Tibial artery (tissue), 4 donors: ENCODE measurements at regions of chr20 and their contacts with region 1.

Region 1: GRCh38 chr20:63864847-63865640 is at the start of gene TPD52L2:
- DNase-seq: peak; percentile 99
- H3K4me3 ChIP-seq: peak within 1 kb of the TSS; percentile 81 to 98
- H3K27ac ChIP-seq: peak within 1 kb of the TSS; percentile 88 to 99
- H3K4me1 ChIP-seq: peaks cover 0 to 44% (median 24%) of the 10 kb centered on the region in 4 donors
- H3K27me3 ChIP-seq: no peaks in the 10 kb centered on the region
- CTCF ChIP-seq: no peak

Region 2: GRCh38 chr20:63537525-63538203 is 327.4 kb before region 1 on chr20:
- intact Hi-C with region 1: loop called (anchors 10 kb)
- DNase-seq: peak; percentile 75 to 87
- H3K4me3 ChIP-seq: peak overlapping the region; percentile 9 to 10
- H3K27ac ChIP-seq: no peak overlapping the region
- H3K4me1 ChIP-seq: peaks cover 0 to 36% (median 8%) of the 10 kb centered on the region in 4 donors
- H3K27me3 ChIP-seq: peaks cover 0 to 81% of the 10 kb centered on the region in 2 donors
- CTCF ChIP-seq: peak; percentile 95 to 96

Region 3: GRCh38 chr20:63627129-63627750 is 237.8 kb before region 1 on chr20:
- intact Hi-C with region 1: loop called (anchors 10 kb)
- DNase-seq: peak; percentile 92 to 96
- H3K4me3 ChIP-seq: peak overlapping the region; percentile 74 to 75
- H3K27ac ChIP-seq: peak overlapping the region; percentile 93 to 97
- H3K4me1 ChIP-seq: peaks cover 0 to 27% (median 20%) of the 10 kb centered on the region in 4 donors
- H3K27me3 ChIP-seq: no peaks in the 10 kb centered on the region
- CTCF ChIP-seq: no peak

Region 4: DNA sequence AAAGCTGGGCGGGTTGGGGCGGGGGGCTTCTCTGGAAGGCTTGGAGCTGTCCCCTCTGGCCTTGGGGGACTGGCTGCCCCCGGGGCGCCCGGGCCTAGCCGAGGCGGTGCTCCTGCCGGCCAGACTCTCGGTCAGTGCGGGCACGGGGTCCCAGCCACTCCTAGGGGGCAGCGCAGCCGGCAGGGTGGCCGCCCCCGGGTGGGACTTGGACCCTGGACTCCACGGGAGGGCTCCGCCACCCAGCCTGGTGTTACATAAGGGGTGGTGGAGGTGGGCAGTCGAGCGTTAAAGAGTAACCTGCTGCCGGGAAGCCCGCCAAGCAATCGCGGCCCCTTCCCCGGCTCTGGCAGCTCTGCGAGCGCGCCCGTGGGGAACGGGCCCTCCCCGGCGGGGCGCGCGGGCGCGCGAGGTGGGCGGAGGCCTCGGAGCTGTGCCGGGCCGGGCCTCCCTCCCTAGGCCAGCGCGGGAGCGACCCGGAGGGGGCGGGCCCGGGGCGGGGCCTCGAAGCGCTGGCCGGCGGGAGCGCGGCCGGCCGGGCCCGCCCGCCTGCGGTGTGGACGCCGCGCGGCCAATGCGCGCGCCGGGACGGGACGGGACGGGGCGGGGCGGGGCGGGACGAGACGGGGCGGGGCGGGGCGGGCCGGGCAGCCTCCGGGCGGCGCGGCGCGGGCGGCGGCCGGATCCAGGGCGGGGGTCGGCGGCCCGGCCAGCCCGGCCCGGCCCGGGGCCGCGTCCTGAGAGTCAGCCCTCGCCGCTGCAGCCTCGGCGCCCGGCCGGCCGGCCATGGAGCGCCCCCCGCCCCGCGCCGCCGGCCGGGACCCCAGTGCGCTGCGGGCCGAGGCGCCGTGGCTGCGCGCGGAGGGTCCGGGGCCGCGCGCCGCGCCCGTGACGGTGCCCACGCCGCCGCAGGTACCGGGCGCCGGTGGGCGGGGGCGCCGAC is 125.6 kb before region 1 on chr20 and contains the start of gene SLC2A4RG:
- intact Hi-C with region 1: loop called (anchors 10 kb)
- DNase-seq: peak; percentile 62 to 90
- H3K4me3 ChIP-seq: peak within 1 kb of the TSS; percentile 84 to 93
- H3K27ac ChIP-seq: peak within 1 kb of the TSS; percentile 97 to 98
- H3K4me1 ChIP-seq: peaks cover 0 to 41% (median 31%) of the 10 kb centered on the region in 4 donors
- H3K27me3 ChIP-seq: no peaks in the 10 kb centered on the region
- CTCF ChIP-seq: no peak

Region 5: DNA sequence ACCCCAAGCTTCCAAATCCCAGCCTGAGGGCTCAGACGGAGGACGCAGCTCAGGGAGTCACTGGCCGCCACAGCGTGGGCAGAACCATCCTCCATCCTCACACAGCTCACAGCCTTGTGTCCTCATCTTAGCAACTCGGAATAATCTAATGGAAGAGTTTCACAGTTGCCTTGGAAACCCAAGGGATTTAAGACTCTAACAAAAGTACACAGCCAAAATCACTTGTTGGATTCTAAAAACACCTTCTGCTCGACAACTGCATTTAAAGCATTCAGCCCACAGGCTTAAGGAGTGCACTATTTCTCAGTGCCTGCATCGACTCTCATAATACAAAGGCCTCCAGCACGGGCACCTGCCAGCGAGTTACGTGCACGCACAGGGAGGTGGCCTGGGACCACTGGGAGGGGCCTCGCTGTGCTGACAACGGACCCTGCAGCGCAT is 79.3 kb before region 1 on chr20:
- intact Hi-C with region 1: loop called (anchors 5 kb)
- DNase-seq: no peak
- H3K4me3 ChIP-seq: no peak overlapping the region
- H3K27ac ChIP-seq: no peak overlapping the region
- H3K4me1 ChIP-seq: no peaks in the 10 kb centered on the region
- H3K27me3 ChIP-seq: no peaks in the 10 kb centered on the region
- CTCF ChIP-seq: no peak

Region 6: GRCh38 chr20:64010711-64011237 is 145.7 kb after region 1 on chr20:
- intact Hi-C with region 1: no loop called
- DNase-seq: no peak
- H3K4me3 ChIP-seq: no peak overlapping the region
- H3K27ac ChIP-seq: no peak overlapping the region
- H3K4me1 ChIP-seq: no peaks in the 10 kb centered on the region
- H3K27me3 ChIP-seq: no peaks in the 10 kb centered on the region
- CTCF ChIP-seq: no peak

Region 7: DNA sequence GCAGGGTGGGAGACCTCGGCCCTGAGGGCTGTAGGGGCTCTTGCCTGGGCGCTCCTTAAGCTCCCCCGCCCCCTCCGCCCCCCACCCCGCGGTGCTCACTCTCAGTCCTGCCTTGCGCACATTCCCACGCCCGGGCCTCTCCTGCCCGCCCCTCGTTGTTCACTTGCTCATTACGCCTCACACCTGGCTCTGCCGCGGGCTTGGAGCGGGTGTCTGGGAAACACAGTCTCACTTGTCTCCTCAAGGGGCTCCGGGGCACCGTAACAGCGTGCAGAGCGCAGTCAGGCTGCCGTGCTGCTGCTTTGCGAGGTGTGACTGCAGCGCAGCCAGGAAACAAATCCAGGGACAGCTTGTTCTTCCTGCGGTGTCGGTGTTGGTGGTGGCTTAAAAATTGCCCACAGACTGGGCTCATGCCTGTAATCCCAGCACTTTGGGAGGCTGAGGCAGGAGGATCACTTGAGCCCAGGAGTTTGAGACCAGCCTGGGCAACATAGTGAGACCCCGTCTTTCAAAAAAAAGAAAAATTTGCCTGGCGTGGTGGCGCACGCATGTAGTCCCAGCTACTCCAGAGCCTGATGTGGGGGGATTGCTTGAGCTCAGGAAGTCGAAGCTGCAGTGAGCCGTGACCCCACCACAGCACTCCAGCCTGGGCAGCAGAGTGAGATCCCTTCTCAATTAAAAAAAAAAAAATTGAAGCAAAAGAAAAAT is 237.8 kb after region 1 on chr20:
- intact Hi-C with region 1: no loop called
- DNase-seq: no peak
- H3K4me3 ChIP-seq: no peak overlapping the region
- H3K27ac ChIP-seq: no peak overlapping the region
- H3K4me1 ChIP-seq: peaks cover 0 to 11% (median 6%) of the 10 kb centered on the region in 4 donors
- H3K27me3 ChIP-seq: peaks cover 0 to 78% of the 10 kb centered on the region in 2 donors
- CTCF ChIP-seq: no peak